ENCODE measurements at regions of chr9 and their contacts with region 1.

Region 1: DNA sequence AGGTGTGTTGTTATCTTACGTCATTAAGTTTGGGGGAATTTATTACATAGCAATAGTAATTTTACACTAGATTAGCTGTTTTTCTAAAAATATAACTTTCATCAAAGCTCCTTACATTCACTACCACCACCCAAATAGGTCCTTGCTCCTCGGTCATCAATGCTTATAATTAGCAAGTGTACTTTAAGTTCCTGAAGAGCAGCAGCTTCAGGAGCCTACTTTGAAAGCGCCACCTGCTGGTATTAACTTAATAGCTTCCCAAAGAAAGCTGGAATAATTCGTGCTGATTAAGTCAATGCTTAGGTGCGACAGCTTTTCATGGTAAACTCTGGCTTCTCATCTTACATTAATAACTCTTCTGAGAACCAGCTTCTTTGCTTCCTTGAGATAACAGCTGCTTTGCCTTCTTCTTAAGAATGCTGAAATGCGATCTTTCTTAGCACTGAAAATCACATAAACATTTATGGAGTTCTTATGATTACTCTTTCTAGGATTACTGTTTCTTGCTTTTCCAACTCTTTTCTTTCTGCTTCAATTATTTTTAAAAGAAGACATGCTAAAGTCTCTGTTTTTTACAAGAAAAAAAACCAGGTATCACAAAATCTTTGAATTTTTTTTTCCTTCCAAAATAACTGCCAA is 10.0 kb upstream of the C5 start:
- DNase-seq: no peak
- ATAC-seq: peak; percentile 18; the same call in 1 of the 2 replicates
- H3K4me3 Mint-ChIP-seq: no peak overlapping the region
- H3K27ac Mint-ChIP-seq: no peak overlapping the region
- H3K4me1 Mint-ChIP-seq: no peaks in the 10 kb centered on the region
- H3K27me3 Mint-ChIP-seq: peaks cover 7% of the 10 kb centered on the region; the same call in 1 of the 2 replicates
- CTCF ChIP-seq: peak; percentile 47

Region 2: GRCh38 chr9:120755827-120756434 is 304.2 kb before region 1 on chr9:
- CTCF ChIA-PET with region 1: interaction called, 23 read pairs
- POLR2A ChIA-PET with region 1: no interaction called
- DNase-seq: peak; percentile 67
- ATAC-seq: peak; percentile 74
- H3K4me3 Mint-ChIP-seq: no peak overlapping the region
- H3K27ac Mint-ChIP-seq: no peak overlapping the region
- H3K4me1 Mint-ChIP-seq: no peaks in the 10 kb centered on the region
- H3K27me3 Mint-ChIP-seq: no peaks in the 10 kb centered on the region
- CTCF ChIP-seq: peak; percentile 84

Region 3: GRCh38 chr9:121023064-121023463 is 37.1 kb before region 1 on chr9:
- CTCF ChIA-PET with region 1: interaction called, 16 read pairs
- POLR2A ChIA-PET with region 1: no interaction called
- DNase-seq: no peak
- ATAC-seq: no peak
- H3K4me3 Mint-ChIP-seq: no peak overlapping the region
- H3K27ac Mint-ChIP-seq: no peak overlapping the region
- H3K4me1 Mint-ChIP-seq: no peaks in the 10 kb centered on the region
- H3K27me3 Mint-ChIP-seq: no peaks in the 10 kb centered on the region
- CTCF ChIP-seq: no peak

Region 4: GRCh38 chr9:121048618-121049017 is 11.5 kb before region 1 on chr9:
- CTCF ChIA-PET with region 1: interaction called, 27 read pairs
- POLR2A ChIA-PET with region 1: no interaction called
- DNase-seq: no peak
- ATAC-seq: no peak
- H3K4me3 Mint-ChIP-seq: no peak overlapping the region
- H3K27ac Mint-ChIP-seq: no peak overlapping the region
- H3K4me1 Mint-ChIP-seq: peaks cover 10% of the 10 kb centered on the region; the same call in 1 of the 2 replicates
- H3K27me3 Mint-ChIP-seq: no peaks in the 10 kb centered on the region
- CTCF ChIP-seq: no peak

Region 5: DNA sequence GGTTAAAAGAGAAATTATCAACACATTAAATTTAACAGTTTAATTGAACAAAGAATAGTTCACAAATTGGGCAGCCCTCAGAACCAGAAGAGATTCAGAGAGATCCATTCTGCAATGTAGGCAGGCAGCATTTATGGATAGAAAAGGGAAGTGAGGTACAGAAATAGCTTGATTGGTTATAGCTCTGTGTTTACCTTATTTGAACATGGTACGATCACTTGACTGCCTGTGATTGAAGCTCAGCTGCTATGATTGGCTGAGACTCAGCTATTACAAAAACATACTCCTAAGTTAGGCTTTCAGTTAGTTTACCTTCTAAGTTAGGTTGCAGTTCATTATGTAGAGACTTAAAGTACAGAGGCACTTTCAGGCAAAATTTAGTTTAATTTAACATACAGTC is 22.0 kb after region 1 on chr9:
- CTCF ChIA-PET with region 1: interaction called, 16 read pairs
- POLR2A ChIA-PET with region 1: no interaction called
- DNase-seq: no peak
- ATAC-seq: no peak
- H3K4me3 Mint-ChIP-seq: no peak overlapping the region
- H3K27ac Mint-ChIP-seq: no peak overlapping the region
- H3K4me1 Mint-ChIP-seq: no peaks in the 10 kb centered on the region
- H3K27me3 Mint-ChIP-seq: peaks cover 2% of the 10 kb centered on the region
- CTCF ChIP-seq: no peak

Region 6: GRCh38 chr9:121160025-121160424 is 99.9 kb after region 1 on chr9:
- CTCF ChIA-PET with region 1: no interaction called
- POLR2A ChIA-PET with region 1: no interaction called
- DNase-seq: no peak
- ATAC-seq: no peak
- H3K4me3 Mint-ChIP-seq: no peak overlapping the region
- H3K27ac Mint-ChIP-seq: no peak overlapping the region
- H3K4me1 Mint-ChIP-seq: no peaks in the 10 kb centered on the region
- H3K27me3 Mint-ChIP-seq: no peaks in the 10 kb centered on the region
- CTCF ChIP-seq: no peak